Breast epithelium (tissue), 4 donors: ENCODE measurements at regions of chr14 and their contacts with region 1.

Region 1: GRCh38 chr14:27911603-27912002 is 855.0 kb upstream of the FOXG1 start:
- DNase-seq: no peak
- H3K4me3 ChIP-seq: no peak overlapping the region
- H3K27ac ChIP-seq: no peak overlapping the region
- H3K4me1 ChIP-seq: no peaks in the 10 kb centered on the region
- H3K27me3 ChIP-seq: no peaks in the 10 kb centered on the region
- CTCF ChIP-seq: no peak
- POLR2A ChIP-seq: no peak

Region 2: GRCh38 chr14:27890259-27890658 is 21.3 kb before region 1 on chr14:
- intact Hi-C with region 1: loop called (anchors 2 kb)
- DNase-seq: no peak
- H3K4me3 ChIP-seq: no peak overlapping the region
- H3K27ac ChIP-seq: no peak overlapping the region
- H3K4me1 ChIP-seq: no peaks in the 10 kb centered on the region
- H3K27me3 ChIP-seq: no peaks in the 10 kb centered on the region
- CTCF ChIP-seq: no peak
- POLR2A ChIP-seq: no peak